Prostate gland (tissue), 2 donors: ENCODE measurements at regions of chr4 and their contacts with region 1.

Region 1: DNA sequence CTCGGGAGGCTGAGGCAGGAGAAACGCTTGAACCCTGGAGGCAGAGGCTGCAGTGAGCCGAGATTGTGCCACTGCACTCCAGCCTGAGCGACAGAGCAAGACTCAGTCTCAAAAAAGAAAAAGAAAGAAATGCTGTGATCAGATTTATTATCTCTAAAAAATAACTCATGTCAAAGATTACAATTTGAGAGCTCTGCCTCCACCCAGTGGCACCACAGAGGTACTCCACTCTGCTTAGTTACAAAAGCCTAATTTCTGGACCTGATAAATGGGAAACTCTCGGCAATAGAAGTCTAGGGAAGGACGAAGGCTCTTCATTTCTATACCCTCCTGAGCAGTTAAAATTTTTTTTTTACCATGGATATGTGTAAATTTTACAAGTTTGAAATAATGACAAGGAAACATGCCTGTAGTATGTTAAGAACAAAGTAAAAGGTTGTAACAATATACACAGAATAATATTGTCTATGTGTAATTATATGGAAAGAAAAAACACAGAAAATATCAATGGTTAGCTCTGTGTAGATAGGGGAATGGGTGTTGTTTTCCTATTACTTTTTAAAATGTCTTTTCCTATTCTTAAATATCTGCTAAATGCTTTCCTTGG is 149.8 kb downstream of the STIM2 start:
- DNase-seq: peak; percentile 47
- H3K4me3 ChIP-seq: no peak overlapping the region
- H3K27ac ChIP-seq: peak overlapping the region; percentile 9 to 25
- H3K4me1 ChIP-seq: peaks cover 7% of the 10 kb centered on the region
- H3K27me3 ChIP-seq: no peaks in the 10 kb centered on the region
- CTCF ChIP-seq: peak; percentile 62 to 87 (median 85)
- POLR2A ChIP-seq: no peak

Region 2: GRCh38 chr4:26459054-26459755 is 551.2 kb before region 1 on chr4:
- intact Hi-C with region 1: loop called (anchors 2 kb)
- DNase-seq: no peak
- H3K4me3 ChIP-seq: no peak overlapping the region
- H3K27ac ChIP-seq: no peak overlapping the region
- H3K4me1 ChIP-seq: no peaks in the 10 kb centered on the region
- H3K27me3 ChIP-seq: no peaks in the 10 kb centered on the region
- CTCF ChIP-seq: peak; percentile 42 to 55 (median 52)
- POLR2A ChIP-seq: no peak

Region 3: DNA sequence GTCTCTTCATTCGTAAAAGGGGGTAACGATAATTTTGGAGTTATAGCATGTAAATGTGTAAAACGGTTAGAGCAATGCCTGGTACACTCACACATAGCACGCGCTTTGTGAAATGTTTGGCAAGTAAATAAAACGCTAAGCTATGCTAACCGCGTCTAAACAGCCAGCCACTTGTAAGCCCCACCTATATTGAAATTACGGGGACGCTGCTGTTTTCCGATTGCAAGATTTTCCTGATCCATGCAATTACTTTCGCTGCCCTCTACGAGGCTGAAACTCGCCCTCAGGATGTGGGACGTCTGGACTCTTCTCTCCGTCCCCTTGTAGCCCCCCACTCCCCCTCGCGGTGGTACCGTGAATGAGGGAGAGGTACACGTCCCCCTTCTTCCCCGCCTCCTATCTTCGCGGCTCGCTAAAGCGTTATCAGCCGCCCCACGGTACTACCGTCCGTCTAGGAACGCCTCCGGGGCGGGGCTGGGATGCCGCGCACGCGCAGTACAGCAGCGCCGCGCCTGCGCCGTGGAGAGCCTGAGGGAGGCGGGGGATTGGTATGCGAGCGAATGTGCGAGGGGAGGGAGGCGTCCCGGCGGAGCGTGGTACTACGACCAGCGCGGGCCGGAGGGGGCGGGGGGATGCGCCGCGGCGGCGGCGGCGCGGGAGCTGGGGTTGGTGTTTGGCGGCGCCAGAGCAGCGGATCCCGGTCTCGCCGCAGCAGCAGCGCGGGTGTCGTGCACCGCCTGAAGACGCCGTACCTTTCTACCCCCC is 150.1 kb before region 1 on chr4 and contains the start of gene STIM2:
- intact Hi-C with region 1: loop called (anchors 5 kb)
- DNase-seq: peak; percentile 96
- H3K4me3 ChIP-seq: peak within 1 kb of the TSS; percentile 91
- H3K27ac ChIP-seq: peak within 1 kb of the TSS; percentile 91 to 95
- H3K4me1 ChIP-seq: no peaks in the 10 kb centered on the region
- H3K27me3 ChIP-seq: no peaks in the 10 kb centered on the region
- CTCF ChIP-seq: peak in 3 of 4 experiments; percentile 23 to 63 (median 61)
- POLR2A ChIP-seq: peak; percentile 94
- total RNA-seq, gene STIM2: 34.4 to 44.2 TPM

Region 4: GRCh38 chr4:27100719-27101515 is 90.5 kb after region 1 on chr4:
- intact Hi-C with region 1: no loop called
- DNase-seq: no peak
- H3K4me3 ChIP-seq: no peak overlapping the region
- H3K27ac ChIP-seq: no peak overlapping the region
- H3K4me1 ChIP-seq: no peaks in the 10 kb centered on the region
- H3K27me3 ChIP-seq: no peaks in the 10 kb centered on the region
- CTCF ChIP-seq: no peak
- POLR2A ChIP-seq: no peak